Activated CD4-positive, alpha-beta T cell treated with anti-CD3 and anti-CD28 coated beads, Interleukin-2, amount 10 ng/mL, durations not matched to agents 24 days and 14 days (primary cell): ENCODE measurements at regions of chr19 and their contacts with region 1.

Region 1: GRCh38 chr19:17511724-17512573 is 500 bp downstream of the PGLS start:
- DNase-seq: peak; percentile 95
- H3K4me3 Mint-ChIP-seq: peak overlapping the region; percentile 88
- H3K27ac Mint-ChIP-seq: peak overlapping the region; percentile 93
- H3K4me1 Mint-ChIP-seq: peaks cover 22% of the 10 kb centered on the region
- H3K27me3 Mint-ChIP-seq: no peaks in the 10 kb centered on the region

Region 2: DNA sequence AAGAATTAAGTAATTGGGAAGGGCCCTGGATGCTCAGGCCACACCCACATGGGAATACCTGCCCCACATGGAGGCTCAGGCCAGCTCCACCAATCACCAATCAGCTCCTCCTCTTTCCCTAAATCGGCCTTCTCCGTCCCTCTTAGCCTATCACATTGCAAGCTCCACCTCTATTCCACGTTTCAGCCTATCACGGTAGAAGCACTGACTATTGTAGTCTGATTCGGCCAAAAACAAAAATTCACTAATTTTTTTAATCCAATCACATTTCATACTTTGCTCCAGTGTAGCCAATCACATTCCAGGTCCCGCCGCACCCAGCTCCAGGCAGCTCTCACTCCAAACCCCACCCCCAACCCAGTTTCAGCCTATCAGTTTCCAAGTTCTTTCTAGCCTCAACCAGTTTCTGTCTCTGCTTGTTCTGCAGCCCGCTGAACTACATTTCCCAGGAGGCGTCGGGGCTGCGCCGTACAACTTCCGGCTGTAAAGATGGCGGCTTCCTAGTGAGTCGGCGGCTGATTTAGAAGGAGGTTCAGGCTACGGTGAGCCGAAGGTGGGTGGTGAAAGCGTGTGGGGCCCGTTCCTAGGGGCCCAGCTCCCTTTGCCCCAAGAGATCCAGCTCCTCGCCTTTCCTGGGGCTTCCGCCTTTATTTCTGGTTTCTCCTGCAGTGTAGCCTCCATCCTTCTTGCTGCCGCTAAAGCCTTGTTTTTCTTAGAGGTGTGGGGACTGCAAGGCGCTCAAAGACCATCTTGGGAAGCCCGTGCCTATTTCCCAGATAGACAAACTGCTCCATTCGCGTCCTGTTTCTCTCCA is 244.8 kb before region 1 on chr19 and contains the start of gene BABAM1:
- intact Hi-C with region 1: loop called (anchors 1 kb)
- DNase-seq: peak; percentile 98
- H3K4me3 Mint-ChIP-seq: peak within 1 kb of the TSS; percentile 95
- H3K27ac Mint-ChIP-seq: peak within 1 kb of the TSS; percentile 79
- H3K4me1 Mint-ChIP-seq: peaks cover 14% of the 10 kb centered on the region
- H3K27me3 Mint-ChIP-seq: no peaks in the 10 kb centered on the region
- total RNA-seq, gene BABAM1: 127 TPM in 2 replicates

Region 3: DNA sequence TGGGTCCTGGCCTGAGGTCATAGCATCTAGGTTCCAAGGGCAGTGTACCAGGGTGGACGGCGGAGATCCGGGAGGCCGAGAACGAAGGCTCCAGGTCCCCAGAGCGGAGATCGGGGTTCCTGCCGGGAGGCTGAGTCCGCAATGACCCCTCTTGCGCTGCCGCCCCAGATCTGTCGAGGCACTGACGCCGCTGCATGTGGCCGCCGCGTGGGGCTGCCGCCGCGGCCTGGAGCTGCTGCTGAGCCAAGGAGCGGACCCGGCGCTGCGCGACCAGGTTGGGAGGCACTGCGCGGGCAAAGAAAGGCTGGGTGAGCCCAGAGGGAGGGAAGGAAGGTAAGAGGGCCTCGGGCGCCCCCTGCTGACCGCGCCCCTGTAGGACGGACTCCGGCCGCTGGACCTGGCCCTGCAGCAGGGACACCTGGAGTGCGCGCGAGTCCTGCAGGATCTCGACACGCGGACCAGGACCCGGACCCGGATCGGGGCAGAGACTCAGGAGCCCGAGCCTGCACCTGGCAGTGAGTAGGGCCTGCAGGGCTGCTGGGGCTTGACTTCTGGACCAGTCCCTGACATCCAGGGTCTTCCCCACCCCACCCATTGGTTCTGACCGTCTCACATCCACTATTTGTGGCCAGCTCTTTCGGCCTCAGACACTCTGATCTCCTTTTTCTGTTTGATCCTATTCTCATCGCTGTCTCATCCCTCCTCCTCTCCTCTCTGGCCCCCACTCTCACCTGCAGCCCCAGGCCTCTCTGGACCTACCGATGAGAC is 229.3 kb before region 1 on chr19:
- intact Hi-C with region 1: no loop called
- DNase-seq: peak; percentile 94
- H3K4me3 Mint-ChIP-seq: peak overlapping the region; percentile 92
- H3K27ac Mint-ChIP-seq: peak overlapping the region; percentile 87
- H3K4me1 Mint-ChIP-seq: peaks cover 8% of the 10 kb centered on the region
- H3K27me3 Mint-ChIP-seq: peaks cover 2% of the 10 kb centered on the region

Region 4: DNA sequence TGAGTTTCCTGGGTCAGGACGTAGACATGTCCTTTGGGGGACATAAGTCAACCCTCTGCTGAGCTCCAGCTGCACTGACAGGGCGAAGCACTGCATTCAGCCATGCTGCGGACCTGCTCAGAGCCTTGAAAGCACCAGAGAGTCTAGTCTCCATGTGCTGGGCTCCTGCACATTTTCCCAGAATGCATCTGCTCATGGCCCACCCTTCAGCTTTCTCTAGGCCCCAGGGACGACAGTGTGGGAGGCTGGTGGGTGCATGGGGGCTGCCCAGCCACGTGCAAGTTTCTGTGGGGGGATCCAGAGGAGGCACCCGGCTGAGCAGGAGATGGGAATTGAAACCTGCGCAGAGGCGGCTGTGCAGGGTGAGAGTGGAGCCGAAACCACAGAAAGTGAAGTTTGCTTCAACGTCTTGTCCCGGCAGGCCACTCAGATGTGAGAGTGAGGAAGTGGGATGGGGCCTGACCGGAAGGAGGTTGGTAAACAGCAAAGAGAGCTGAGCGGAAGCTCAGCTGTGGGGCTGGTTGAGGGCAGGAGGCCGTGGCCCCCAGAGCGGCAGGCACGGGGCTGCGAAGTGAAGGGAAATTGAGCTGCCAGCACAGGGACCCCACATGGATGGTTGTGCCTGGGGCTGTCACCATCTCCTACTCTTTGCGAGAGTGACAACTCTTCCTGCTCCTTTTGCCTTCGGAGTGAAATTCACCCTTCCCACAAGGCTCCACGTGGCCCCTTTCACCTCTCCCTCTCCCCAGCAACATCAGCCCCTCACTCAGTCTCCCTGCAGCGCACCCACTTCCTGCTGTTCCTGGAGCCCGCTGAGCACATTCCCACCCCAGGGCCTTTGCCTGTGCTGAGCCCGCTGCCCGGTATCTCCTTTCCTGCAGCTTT is 11.3 kb after region 1 on chr19:
- intact Hi-C with region 1: loop called (anchors 1 kb)
- DNase-seq: peak; percentile 88
- H3K4me3 Mint-ChIP-seq: peak overlapping the region; percentile 72
- H3K27ac Mint-ChIP-seq: peak overlapping the region; percentile 89
- H3K4me1 Mint-ChIP-seq: peaks cover 14% of the 10 kb centered on the region
- H3K27me3 Mint-ChIP-seq: peaks cover 2% of the 10 kb centered on the region

Region 5: GRCh38 chr19:17539238-17540117 is 27.5 kb after region 1 on chr19:
- intact Hi-C with region 1: loop called (anchors 1 kb)
- DNase-seq: peak; percentile 99
- H3K4me3 Mint-ChIP-seq: peak overlapping the region; percentile 86
- H3K27ac Mint-ChIP-seq: peak overlapping the region; percentile 64
- H3K4me1 Mint-ChIP-seq: peaks cover 13% of the 10 kb centered on the region
- H3K27me3 Mint-ChIP-seq: peaks cover 18% of the 10 kb centered on the region

Region 6: GRCh38 chr19:17555480-17555928 is 43.6 kb after region 1 on chr19 and contains the start of gene COLGALT1:
- intact Hi-C with region 1: loop called (anchors 1 kb)
- DNase-seq: peak; percentile 100
- H3K4me3 Mint-ChIP-seq: peak within 1 kb of the TSS; percentile 90
- H3K27ac Mint-ChIP-seq: peak within 1 kb of the TSS; percentile 83
- H3K4me1 Mint-ChIP-seq: peaks cover 13% of the 10 kb centered on the region
- H3K27me3 Mint-ChIP-seq: no peaks in the 10 kb centered on the region
- total RNA-seq, gene COLGALT1: 103 and 106 TPM in 2 replicates